Activated B cell treated with CpG ODN at 0.5 μM for 24 hours (primary cell): ENCODE measurements at regions of chr6 and their contacts with region 1.

Region 1: DNA sequence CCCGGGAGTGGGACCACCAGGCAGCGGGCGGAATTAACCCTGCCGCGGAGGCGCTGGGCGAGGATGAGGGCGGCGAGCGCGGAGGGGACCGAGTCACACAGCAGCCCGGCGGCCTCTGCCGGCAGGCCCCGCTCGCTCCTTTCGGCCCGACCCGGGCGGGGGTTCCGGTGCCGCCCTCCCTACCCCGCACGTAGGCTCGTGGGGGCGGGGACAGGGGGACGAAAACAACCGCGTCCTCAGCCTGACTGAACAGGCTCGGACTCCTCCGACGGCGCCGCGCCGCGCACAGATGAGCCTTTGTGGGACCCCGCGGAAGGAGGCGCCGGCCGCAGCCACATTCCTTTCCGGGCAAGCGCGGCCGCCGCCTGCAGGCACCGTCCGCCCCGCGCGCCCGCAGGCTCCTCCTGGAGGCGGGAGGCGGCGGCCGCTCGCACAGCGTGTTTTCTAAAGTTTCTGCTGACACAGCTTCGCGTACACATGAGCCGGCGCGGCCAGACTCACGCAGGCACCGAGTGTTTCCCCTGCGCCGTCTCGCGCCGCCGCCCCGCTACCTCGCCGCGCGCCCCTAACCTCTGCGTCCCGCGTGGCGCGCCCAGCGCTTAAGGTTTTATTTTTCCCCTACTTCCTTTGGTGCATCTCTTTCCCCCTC is 244.3 kb downstream of the ARID1B start:
- DNase-seq: peak; percentile 87
- ATAC-seq: peak; percentile 79
- H3K4me3 Mint-ChIP-seq: peak overlapping the region; percentile 90
- H3K27ac Mint-ChIP-seq: peak overlapping the region; percentile 98
- H3K4me1 Mint-ChIP-seq: peaks cover 66% of the 10 kb centered on the region
- H3K27me3 Mint-ChIP-seq: no peaks in the 10 kb centered on the region
- CTCF ChIP-seq: no peak

Region 2: GRCh38 chr6:155314092-155314772 is 1707.2 kb before region 1 on chr6 and contains the start of gene TFB1M:
- CTCF ChIA-PET with region 1: no interaction called
- POLR2A ChIA-PET with region 1: no interaction called
- intact Hi-C with region 1: loop called (anchors 1 kb)
- DNase-seq: peak; percentile 90
- ATAC-seq: peak; percentile 94
- H3K4me3 Mint-ChIP-seq: peak within 1 kb of the TSS; percentile 97
- H3K27ac Mint-ChIP-seq: peak within 1 kb of the TSS; percentile 93
- H3K4me1 Mint-ChIP-seq: peaks cover 28% of the 10 kb centered on the region
- H3K27me3 Mint-ChIP-seq: no peaks in the 10 kb centered on the region
- CTCF ChIP-seq: no peak
- total RNA-seq, gene TFB1M: 35.2 and 41.5 TPM in 2 replicates

Region 3: DNA sequence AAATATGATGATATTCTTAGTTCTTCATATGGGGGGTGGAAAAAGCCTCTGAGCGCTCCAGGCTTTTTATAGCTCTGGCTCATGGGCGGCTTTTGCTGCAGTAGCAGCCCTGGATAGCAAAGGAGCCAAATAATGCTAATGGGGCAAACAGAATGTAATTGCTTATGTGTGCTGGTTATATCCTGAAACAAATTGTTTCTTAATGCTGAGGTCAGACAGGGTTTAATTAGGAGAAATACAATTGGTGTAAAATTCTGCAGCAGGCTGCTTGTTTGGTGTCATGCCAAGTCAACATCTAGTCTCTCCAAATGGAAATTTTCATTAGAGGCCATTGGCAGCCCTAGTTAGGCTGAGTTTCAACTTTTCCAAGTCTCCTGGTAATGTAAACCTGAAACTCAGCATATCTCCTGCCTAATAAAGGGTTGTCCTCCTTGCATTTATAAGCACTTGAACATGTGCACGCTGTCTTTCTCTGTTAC is 1035.8 kb before region 1 on chr6:
- CTCF ChIA-PET with region 1: no interaction called
- POLR2A ChIA-PET with region 1: no interaction called
- intact Hi-C with region 1: no loop called
- DNase-seq: no peak
- ATAC-seq: no peak
- H3K4me3 Mint-ChIP-seq: no peak overlapping the region
- H3K27ac Mint-ChIP-seq: no peak overlapping the region
- H3K4me1 Mint-ChIP-seq: no peaks in the 10 kb centered on the region
- H3K27me3 Mint-ChIP-seq: no peaks in the 10 kb centered on the region
- CTCF ChIP-seq: no peak

Region 4: GRCh38 chr6:156564127-156564806 is 457.2 kb before region 1 on chr6:
- CTCF ChIA-PET with region 1: interaction called, 4 read pairs
- POLR2A ChIA-PET with region 1: no interaction called
- intact Hi-C with region 1: loop called (anchors 1 kb)
- DNase-seq: peak; percentile 78
- ATAC-seq: peak; percentile 100
- H3K4me3 Mint-ChIP-seq: no peak overlapping the region
- H3K27ac Mint-ChIP-seq: no peak overlapping the region
- H3K4me1 Mint-ChIP-seq: peaks cover 10% of the 10 kb centered on the region
- H3K27me3 Mint-ChIP-seq: peaks cover 5% of the 10 kb centered on the region
- CTCF ChIP-seq: peak; percentile 76

Region 5: DNA sequence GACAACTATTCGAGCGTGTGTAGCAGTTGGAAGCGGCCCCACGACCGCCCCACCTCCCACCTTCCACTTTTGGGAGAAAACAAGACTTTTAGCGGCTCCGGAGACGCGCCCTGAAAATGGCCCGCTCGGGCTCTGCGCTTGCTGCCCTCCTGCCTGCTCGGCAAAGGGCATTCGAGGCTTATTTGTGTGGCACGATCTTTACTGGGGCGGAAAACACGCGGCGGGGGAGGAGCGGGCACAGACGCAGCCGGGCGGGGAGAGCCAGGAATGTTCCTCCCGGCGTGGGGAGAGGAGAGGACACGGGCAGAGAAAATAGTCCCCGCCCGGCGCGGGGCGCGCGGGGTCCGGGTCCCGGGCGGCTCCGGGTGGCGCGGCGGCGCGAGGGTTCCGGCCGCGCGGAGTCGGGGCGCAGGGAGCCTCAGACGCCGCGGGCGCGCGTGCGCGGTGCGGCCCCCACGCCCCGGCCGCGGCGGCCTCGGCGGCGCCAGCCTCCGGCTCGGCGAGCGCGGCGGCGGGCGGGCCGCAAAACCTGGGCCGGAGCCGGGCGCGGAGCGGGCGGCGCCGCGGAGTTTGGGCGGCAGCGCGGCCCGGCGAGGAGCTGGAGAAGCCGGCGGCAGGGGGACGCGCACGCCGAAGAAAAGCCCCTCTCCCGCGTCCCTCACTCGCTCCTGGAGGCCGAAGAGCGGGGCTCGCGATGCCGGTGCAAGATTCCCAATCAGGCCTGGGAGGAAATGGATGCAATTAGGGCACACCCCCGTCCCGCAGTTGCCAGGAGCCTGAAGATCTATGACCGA is 334.3 kb before region 1 on chr6:
- CTCF ChIA-PET with region 1: no interaction called
- POLR2A ChIA-PET with region 1: interaction called, 8 read pairs
- intact Hi-C with region 1: loop called (anchors 1 kb)
- DNase-seq: peak; percentile 86
- ATAC-seq: peak; percentile 79
- H3K4me3 Mint-ChIP-seq: peak overlapping the region; percentile 94
- H3K27ac Mint-ChIP-seq: peak overlapping the region; percentile 98
- H3K4me1 Mint-ChIP-seq: peaks cover 62% of the 10 kb centered on the region
- H3K27me3 Mint-ChIP-seq: no peaks in the 10 kb centered on the region
- CTCF ChIP-seq: no peak

Region 6: DNA sequence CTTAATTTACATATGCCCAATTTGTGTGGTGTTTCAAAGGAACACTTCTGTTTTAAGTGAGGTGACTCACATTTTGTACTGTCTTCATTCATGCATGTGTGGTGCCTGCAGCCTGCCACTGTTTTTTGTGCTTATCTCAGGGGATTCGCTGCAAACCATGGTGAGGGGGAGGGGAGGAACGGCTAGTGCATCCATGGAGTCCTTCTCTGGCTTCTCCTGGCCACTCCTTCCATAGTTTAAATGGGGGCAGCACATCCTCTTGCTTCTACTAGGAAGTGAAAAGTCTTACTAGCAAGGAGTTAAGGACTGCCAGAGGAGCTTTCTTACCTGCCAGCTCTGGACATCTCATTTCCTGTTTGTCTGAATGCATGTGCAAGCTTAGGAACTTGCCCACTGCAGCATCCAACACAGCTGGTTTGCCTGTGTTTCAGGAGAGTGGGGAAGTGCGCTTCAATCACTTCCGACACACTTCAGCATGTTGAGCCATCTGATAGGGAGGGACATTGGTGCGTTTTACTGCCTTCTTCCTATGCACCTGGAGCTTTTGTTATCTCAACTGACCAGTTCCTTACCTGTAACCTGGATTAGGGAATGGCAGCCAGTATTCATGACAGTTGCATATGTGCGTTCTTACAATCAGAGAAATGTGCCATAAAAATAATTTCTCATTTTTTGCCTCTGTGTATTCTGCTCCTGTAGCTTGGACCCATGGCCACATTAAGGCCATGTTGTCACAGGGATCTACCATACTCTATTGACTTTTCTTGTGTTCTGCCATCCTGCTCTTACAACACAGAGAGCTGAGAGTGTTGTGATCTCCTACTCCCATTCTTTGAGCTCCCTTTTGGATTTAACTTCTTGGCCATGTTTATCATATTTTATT is 33.0 kb before region 1 on chr6:
- CTCF ChIA-PET with region 1: no interaction called
- POLR2A ChIA-PET with region 1: interaction called, 7 read pairs
- intact Hi-C with region 1: loop called (anchors 1 kb)
- DNase-seq: peak; percentile 41
- ATAC-seq: peak; percentile 90
- H3K4me3 Mint-ChIP-seq: peak overlapping the region; percentile 57
- H3K27ac Mint-ChIP-seq: peak overlapping the region; percentile 73
- H3K4me1 Mint-ChIP-seq: peaks cover 88% of the 10 kb centered on the region
- H3K27me3 Mint-ChIP-seq: no peaks in the 10 kb centered on the region
- CTCF ChIP-seq: no peak

Region 7: GRCh38 chr6:157068691-157069324 is 47.3 kb after region 1 on chr6:
- CTCF ChIA-PET with region 1: no interaction called
- POLR2A ChIA-PET with region 1: interaction called, 6 read pairs
- intact Hi-C with region 1: loop called (anchors 1 kb)
- DNase-seq: no peak
- ATAC-seq: peak; percentile 89
- H3K4me3 Mint-ChIP-seq: peak overlapping the region; percentile 29
- H3K27ac Mint-ChIP-seq: peak overlapping the region; percentile 64
- H3K4me1 Mint-ChIP-seq: peaks cover 78% of the 10 kb centered on the region
- H3K27me3 Mint-ChIP-seq: no peaks in the 10 kb centered on the region
- CTCF ChIP-seq: no peak

Region 8: GRCh38 chr6:157379656-157380454 is 358.4 kb after region 1 on chr6:
- CTCF ChIA-PET with region 1: no interaction called
- POLR2A ChIA-PET with region 1: no interaction called
- intact Hi-C with region 1: loop called (anchors 5 kb)
- DNase-seq: peak; percentile 76
- ATAC-seq: peak; percentile 77
- H3K4me3 Mint-ChIP-seq: peak overlapping the region; percentile 87
- H3K27ac Mint-ChIP-seq: peak overlapping the region; percentile 78
- H3K4me1 Mint-ChIP-seq: peaks cover 40% of the 10 kb centered on the region
- H3K27me3 Mint-ChIP-seq: peaks cover 8% of the 10 kb centered on the region
- CTCF ChIP-seq: no peak